GM12878 (cell line): ENCODE measurements at regions of chr5 and their contacts with region 1.

Region 1: DNA sequence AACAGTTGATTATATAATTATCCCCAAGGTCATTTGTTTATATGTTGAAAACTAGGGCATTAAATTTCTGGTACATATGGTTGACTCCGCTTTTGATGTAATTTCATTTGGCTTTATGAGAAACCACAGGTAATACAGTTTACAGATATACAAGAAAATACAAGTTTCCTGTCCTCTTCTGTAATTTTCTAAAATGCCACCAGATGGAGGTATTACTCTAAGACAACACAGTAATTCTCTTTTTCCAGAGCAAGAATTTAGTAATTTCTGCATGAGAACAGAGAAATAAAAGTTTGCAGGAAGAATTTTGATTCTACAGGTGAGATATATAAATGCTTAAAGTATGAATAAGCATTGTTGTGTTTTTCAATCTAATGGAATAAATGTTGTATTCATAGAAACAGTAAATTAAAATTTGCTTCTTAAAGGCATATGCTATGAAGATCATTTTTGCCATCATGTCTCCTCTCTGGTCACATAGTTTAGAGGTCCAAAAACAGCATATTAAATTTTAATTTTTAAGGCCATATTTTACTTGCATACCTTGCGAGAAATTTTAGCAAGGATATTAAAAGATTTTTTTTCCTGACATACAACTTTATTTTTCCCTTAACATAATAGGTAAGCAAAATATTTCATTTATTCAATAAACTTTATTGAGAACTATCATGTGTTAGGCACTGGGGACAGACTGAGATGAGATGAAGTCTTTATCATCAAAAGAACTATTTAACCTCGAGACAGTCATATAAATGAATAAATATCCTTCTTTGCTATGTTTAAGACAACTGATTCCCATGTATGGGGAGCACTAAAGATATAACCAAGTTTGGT is 22.7 kb downstream of the CHD1 start:
- DNase-seq: no peak
- ATAC-seq: peak; percentile 70
- H3K4me3 ChIP-seq: no peak overlapping the region
- H3K27ac ChIP-seq: no peak overlapping the region
- H3K4me1 ChIP-seq: no peaks in the 10 kb centered on the region; the same call in 1 of the 2 replicates
- H3K27me3 ChIP-seq: no peaks in the 10 kb centered on the region
- CTCF ChIP-seq: peak; percentile 47 to 65 (median 47); a peak in 5 of 6 replicates
- EP300 ChIP-seq: no peak
- POLR2A ChIP-seq: no peak
- RAD21 ChIP-seq: peak; percentile 92

Region 2: GRCh38 chr5:98268162-98268860 is 637.8 kb before region 1 on chr5:
- CTCF ChIA-PET with region 1: no interaction called
- POLR2A ChIA-PET with region 1: no interaction called
- RAD21 ChIA-PET with region 1: no interaction called
- SMC1A ChIA-PET with region 1: no interaction called
- in situ Hi-C with region 1: no loop called
- intact Hi-C with region 1: no loop called
- DNase-seq: no peak
- ATAC-seq: no peak
- H3K4me3 ChIP-seq: no peak overlapping the region
- H3K27ac ChIP-seq: no peak overlapping the region
- H3K4me1 ChIP-seq: no peaks in the 10 kb centered on the region
- H3K27me3 ChIP-seq: no peaks in the 10 kb centered on the region
- CTCF ChIP-seq: no peak
- EP300 ChIP-seq: no peak
- POLR2A ChIP-seq: no peak
- RAD21 ChIP-seq: no peak

Region 3: DNA sequence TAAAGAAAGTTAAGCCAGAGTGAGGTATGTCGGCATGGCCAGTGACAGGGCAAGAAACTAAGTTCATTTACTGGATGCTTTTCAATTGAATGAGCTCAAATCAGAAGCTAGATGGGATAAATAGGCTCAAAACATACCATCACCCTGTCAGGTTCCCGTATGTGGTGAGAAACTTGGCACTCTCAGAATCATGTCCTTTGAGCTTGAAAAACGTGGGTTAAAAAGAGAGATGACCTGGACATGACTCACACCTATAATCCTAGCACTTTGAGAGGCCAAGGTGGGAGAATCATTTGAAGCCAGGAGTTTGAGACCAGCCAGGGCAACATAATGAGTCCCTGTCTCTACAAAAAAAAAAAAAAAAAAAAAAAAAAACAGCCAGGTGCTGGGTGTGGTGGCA is 254.4 kb before region 1 on chr5:
- CTCF ChIA-PET with region 1: no interaction called
- POLR2A ChIA-PET with region 1: no interaction called
- RAD21 ChIA-PET with region 1: no interaction called
- SMC1A ChIA-PET with region 1: no interaction called
- in situ Hi-C with region 1: no loop called
- intact Hi-C with region 1: no loop called
- DNase-seq: no peak
- ATAC-seq: no peak
- H3K4me3 ChIP-seq: no peak overlapping the region
- H3K27ac ChIP-seq: no peak overlapping the region
- H3K4me1 ChIP-seq: no peaks in the 10 kb centered on the region
- H3K27me3 ChIP-seq: peaks cover 0 to 2% of the 10 kb centered on the region in 2 experiments; a peak in 1 of 4 replicates
- CTCF ChIP-seq: no peak
- EP300 ChIP-seq: no peak
- POLR2A ChIP-seq: no peak
- RAD21 ChIP-seq: no peak

Region 4: DNA sequence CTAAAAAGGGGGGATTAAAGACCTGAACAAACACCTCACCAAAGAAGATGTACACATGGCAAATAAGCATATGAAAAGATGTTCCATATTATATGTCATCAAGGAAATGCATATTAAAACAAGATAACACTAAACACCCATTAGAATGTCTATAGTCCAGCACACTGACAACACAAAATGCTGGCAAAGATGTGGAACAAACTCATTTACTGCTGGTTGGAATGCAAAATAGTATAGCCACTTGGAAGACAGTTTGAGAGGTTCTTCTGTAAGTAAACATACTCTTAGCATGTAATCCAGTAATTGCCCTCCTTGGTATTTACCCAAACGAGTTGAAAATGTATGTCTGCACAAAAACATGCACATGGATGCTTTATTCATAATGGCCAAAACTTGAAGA is 59.0 kb before region 1 on chr5:
- CTCF ChIA-PET with region 1: no interaction called
- POLR2A ChIA-PET with region 1: no interaction called
- RAD21 ChIA-PET with region 1: no interaction called
- SMC1A ChIA-PET with region 1: no interaction called
- in situ Hi-C with region 1: no loop called
- intact Hi-C with region 1: no loop called
- DNase-seq: no peak
- ATAC-seq: no peak
- H3K4me3 ChIP-seq: no peak overlapping the region
- H3K27ac ChIP-seq: no peak overlapping the region
- H3K4me1 ChIP-seq: no peaks in the 10 kb centered on the region
- H3K27me3 ChIP-seq: no peaks in the 10 kb centered on the region
- CTCF ChIP-seq: no peak
- EP300 ChIP-seq: no peak
- POLR2A ChIP-seq: no peak
- RAD21 ChIP-seq: no peak

Region 5: DNA sequence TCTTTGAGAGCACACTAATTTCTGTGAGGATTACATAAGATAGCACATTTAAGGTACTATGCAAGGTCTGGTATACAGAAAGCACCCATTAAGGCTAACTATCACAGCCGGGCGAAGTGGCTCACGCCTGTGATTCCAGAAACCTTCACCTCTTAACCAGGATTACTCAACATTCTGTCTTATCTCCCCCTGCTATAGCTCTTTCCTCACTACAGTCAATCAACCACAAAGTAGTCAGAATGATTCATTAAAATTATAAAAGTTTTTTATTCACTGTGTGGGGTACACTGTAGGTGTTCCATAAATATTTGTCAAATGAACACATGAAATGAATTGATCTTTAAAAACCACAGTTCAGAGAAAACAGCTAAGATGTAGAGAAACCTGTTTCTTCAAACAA is 25.9 kb before region 1 on chr5:
- CTCF ChIA-PET with region 1: interaction called, 3 read pairs
- POLR2A ChIA-PET with region 1: no interaction called
- RAD21 ChIA-PET with region 1: no interaction called
- SMC1A ChIA-PET with region 1: interaction called, 10 read pairs
- in situ Hi-C with region 1: no loop called
- intact Hi-C with region 1: no loop called
- DNase-seq: no peak
- ATAC-seq: no peak
- H3K4me3 ChIP-seq: no peak overlapping the region
- H3K27ac ChIP-seq: no peak overlapping the region
- H3K4me1 ChIP-seq: 0 out of 2 replicates have a peak, but pooled peaks cover 2% of the 10 kb centered on the region
- H3K27me3 ChIP-seq: no peaks in the 10 kb centered on the region
- CTCF ChIP-seq: no peak
- EP300 ChIP-seq: no peak
- POLR2A ChIP-seq: no peak
- RAD21 ChIP-seq: no peak

Region 6: DNA sequence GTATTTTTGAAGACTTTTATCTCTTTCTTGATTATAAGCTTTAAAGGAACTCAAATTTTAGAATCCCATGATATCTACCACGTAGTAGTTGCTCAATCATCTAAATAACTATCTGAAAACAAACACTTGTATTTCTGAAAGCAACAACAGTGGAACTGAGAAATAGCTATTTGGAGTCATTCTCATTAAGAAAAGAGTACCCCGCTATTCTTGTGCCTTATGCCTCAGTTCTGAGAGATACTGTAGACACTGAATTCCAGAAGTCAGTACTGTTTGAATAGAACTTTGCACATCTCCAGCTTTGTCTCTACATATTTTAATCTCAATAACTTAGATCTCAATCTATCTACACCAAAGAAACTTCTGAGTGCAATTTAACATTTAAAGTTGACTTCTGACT is 11.4 kb after region 1 on chr5:
- CTCF ChIA-PET with region 1: interaction called, 17 read pairs
- POLR2A ChIA-PET with region 1: interaction called, 3 read pairs
- RAD21 ChIA-PET with region 1: interaction called, 4 read pairs
- SMC1A ChIA-PET with region 1: interaction called, 14 read pairs
- in situ Hi-C with region 1: no loop called
- intact Hi-C with region 1: no loop called
- DNase-seq: no peak
- ATAC-seq: peak; percentile 53
- H3K4me3 ChIP-seq: 0 out of 2 replicates have a peak overlapping the region, but pooled peaks have one; percentile 10
- H3K27ac ChIP-seq: no peak overlapping the region
- H3K4me1 ChIP-seq: no peaks in the 10 kb centered on the region
- H3K27me3 ChIP-seq: no peaks in the 10 kb centered on the region
- CTCF ChIP-seq: no peak
- EP300 ChIP-seq: no peak
- POLR2A ChIP-seq: no peak
- RAD21 ChIP-seq: no peak